Activated CD8-positive, alpha-beta T cell treated with anti-CD3 and anti-CD28 coated beads, Interleukin-2, amount 10 ng/mL, durations not matched to agents 7 days and 5 days (primary cell): ENCODE measurements at regions of chr10 and their contacts with region 1.

Region 1: DNA sequence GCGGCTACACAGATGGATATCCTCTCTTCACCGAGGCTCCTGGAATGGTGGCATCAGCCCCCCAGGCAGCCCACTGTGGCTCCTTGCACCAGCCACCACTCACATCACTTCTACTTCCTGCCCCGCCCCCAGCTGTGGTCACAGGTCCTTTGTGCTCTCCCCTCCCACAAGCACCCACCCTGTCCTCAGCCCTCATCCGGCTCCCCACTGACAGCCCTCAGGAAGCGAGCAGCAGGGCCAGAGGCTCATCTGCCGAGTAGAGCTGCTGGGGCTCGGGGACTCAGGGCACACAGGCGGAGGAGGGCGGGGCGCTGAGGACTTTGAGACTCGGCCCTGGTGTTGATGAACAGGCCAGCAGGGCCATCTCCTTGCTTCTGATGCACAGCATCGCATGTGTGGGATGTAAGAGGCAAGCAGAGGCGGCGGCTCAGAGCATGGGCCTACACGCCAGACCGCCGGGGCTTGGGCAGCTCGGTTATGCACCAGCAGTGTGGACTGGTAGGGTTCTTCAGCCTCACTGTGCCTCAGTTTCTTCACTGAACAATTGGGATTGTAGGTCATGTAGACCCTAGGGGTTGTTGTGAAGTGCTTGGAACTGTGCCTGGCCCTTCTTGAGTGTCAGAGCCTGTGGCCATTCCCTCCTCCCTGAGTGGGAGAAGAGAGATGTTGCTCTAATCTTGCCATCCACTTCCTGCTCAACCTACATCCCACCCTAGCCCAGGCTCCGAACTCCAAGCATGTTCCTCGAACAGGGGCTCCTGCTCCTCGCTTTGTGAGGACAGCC is at the start of gene PRF1:
- DNase-seq: peak; percentile 97
- ATAC-seq: peak; percentile 95
- H3K4me3 Mint-ChIP-seq: peak within 1 kb of the TSS; percentile 96
- H3K27ac Mint-ChIP-seq: peak within 1 kb of the TSS; percentile 93
- H3K4me1 Mint-ChIP-seq: peaks cover 67% of the 10 kb centered on the region
- H3K27me3 Mint-ChIP-seq: no peaks in the 10 kb centered on the region
- total RNA-seq, gene PRF1: 265 to 272 TPM

Region 2: GRCh38 chr10:69994262-69994661 is 608.6 kb before region 1 on chr10:
- CTCF ChIA-PET with region 1: no interaction called
- POLR2A ChIA-PET with region 1: no interaction called
- DNase-seq: no peak
- ATAC-seq: no peak
- H3K4me3 Mint-ChIP-seq: no peak overlapping the region
- H3K27ac Mint-ChIP-seq: no peak overlapping the region
- H3K4me1 Mint-ChIP-seq: no peaks in the 10 kb centered on the region
- H3K27me3 Mint-ChIP-seq: peaks cover 20% of the 10 kb centered on the region

Region 3: GRCh38 chr10:70575874-70576802 is 26.7 kb before region 1 on chr10:
- CTCF ChIA-PET with region 1: interaction called, 8 read pairs
- POLR2A ChIA-PET with region 1: interaction called, 12 read pairs
- DNase-seq: peak; percentile 70
- ATAC-seq: peak; percentile 4
- H3K4me3 Mint-ChIP-seq: peak overlapping the region; percentile 39
- H3K27ac Mint-ChIP-seq: peak overlapping the region; percentile 78
- H3K4me1 Mint-ChIP-seq: peaks cover 78% of the 10 kb centered on the region
- H3K27me3 Mint-ChIP-seq: no peaks in the 10 kb centered on the region

Region 4: DNA sequence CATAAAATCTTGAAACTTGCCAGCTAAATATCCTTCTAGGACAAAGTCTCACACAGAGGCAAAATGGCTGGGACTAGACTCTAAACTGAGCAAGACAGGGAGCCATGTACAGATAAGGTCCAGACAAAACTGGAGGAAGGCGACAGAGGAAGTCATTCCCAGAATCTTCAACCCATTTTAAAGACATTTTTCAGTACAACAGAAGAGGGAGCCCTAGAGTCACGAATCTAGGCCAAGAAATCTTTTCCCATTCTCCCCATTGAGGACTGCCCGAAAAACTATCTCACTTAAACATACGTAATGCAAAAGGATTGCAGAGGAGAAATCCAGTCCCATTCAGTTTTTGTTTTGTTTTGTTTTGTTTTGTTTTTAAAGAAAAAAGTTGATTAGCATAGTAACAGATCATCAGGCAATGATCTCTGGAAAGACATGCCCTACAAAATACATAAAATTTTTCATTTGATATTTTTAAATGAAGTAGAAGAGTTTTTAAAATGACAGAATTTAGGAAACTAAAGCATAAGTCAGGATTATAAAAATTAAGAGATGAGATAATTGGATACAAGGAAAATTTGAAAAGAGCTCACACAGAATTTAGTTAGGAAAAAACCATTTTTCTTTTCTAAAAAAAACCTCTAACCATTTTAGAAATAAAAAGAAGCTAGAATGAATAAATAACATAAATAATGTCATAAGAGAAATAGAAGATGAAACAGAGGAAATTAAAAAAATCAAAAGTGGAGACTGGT is 16.6 kb after region 1 on chr10:
- CTCF ChIA-PET with region 1: interaction called, 15 read pairs
- POLR2A ChIA-PET with region 1: interaction called, 6 read pairs
- DNase-seq: no peak
- ATAC-seq: no peak
- H3K4me3 Mint-ChIP-seq: no peak overlapping the region
- H3K27ac Mint-ChIP-seq: no peak overlapping the region
- H3K4me1 Mint-ChIP-seq: peaks cover 46% of the 10 kb centered on the region
- H3K27me3 Mint-ChIP-seq: no peaks in the 10 kb centered on the region

Region 5: DNA sequence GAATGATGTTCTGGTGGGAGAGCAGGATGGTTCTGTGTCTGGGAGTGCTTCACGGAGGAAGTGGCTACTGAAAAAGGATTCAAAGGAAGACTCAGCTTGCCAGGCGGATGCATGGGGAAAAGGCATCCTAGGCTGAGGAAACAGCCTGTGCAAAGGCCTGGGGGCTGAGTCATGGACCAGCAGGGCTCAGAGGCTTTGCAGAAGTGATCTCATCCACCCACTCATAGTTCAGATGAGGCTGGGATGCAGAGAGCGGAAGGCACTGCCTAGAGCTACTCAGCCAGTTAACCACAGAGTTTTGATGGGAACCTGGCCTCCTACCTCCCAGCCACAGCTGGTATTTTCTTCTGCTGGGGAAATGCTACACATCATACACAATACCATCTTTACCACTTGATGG is 53.6 kb after region 1 on chr10:
- CTCF ChIA-PET with region 1: no interaction called
- POLR2A ChIA-PET with region 1: no interaction called
- DNase-seq: peak; percentile 46
- ATAC-seq: peak; percentile 71
- H3K4me3 Mint-ChIP-seq: no peak overlapping the region
- H3K27ac Mint-ChIP-seq: no peak overlapping the region
- H3K4me1 Mint-ChIP-seq: peaks cover 13% of the 10 kb centered on the region
- H3K27me3 Mint-ChIP-seq: peaks cover 10% of the 10 kb centered on the region